PC-3 (cell line): ENCODE measurements at regions of chr12 and their contacts with region 1.

Region 1: GRCh38 chr12:90801776-90802175 is 153.2 kb downstream of the CCER1 start:
- DNase-seq: peak; percentile 77
- ATAC-seq: peak; percentile 91
- H3K4me3 ChIP-seq: no peak overlapping the region
- H3K27ac ChIP-seq: peak overlapping the region; percentile 64
- H3K4me1 ChIP-seq: peaks cover 20% of the 10 kb centered on the region
- H3K27me3 ChIP-seq: no peaks in the 10 kb centered on the region
- CTCF ChIP-seq: no peak

Region 2: DNA sequence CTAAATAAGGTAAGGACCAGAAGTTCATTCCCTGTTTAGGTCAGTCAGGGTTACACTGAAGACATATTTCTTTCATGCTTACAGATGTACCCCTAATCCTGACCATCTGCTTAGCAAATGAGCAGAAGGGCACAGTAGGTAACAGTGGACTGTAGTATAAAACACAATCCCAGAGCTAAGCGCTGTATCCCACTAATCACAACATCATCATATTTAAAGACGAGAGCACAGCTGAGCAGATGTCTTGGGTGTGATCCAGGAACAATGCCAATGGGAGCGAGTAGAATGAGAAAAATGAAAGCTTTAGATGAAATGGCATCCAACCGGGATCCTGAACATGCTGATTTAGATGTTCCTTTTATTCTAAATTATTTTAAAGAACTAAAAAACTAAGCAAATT is 60.2 kb before region 1 on chr12:
- CTCF ChIA-PET with region 1: no interaction called
- POLR2A ChIA-PET with region 1: no interaction called
- intact Hi-C with region 1: loop called (anchors 10 kb)
- DNase-seq: no peak
- ATAC-seq: no peak
- H3K4me3 ChIP-seq: no peak overlapping the region
- H3K27ac ChIP-seq: no peak overlapping the region
- H3K4me1 ChIP-seq: no peaks in the 10 kb centered on the region
- H3K27me3 ChIP-seq: no peaks in the 10 kb centered on the region
- CTCF ChIP-seq: no peak